Activated B cell treated with CpG ODN at 0.5 μM for 24 hours (primary cell): ENCODE measurements at regions of chr19 and their contacts with region 1.

Region 1: GRCh38 chr19:14550201-14550784 is 20.9 kb downstream of the TECR start:
- DNase-seq: no peak
- ATAC-seq: no peak
- H3K4me3 Mint-ChIP-seq: no peak overlapping the region
- H3K27ac Mint-ChIP-seq: no peak overlapping the region
- H3K4me1 Mint-ChIP-seq: peaks cover 33% of the 10 kb centered on the region
- H3K27me3 Mint-ChIP-seq: no peaks in the 10 kb centered on the region
- CTCF ChIP-seq: no peak

Region 2: GRCh38 chr19:14529254-14530004 is 20.9 kb before region 1 on chr19 and contains the start of gene TECR:
- CTCF ChIA-PET with region 1: interaction called, 3 read pairs
- POLR2A ChIA-PET with region 1: interaction called, 6 read pairs
- intact Hi-C with region 1: loop called (anchors 2 kb)
- DNase-seq: peak; percentile 99
- ATAC-seq: peak; percentile 96
- H3K4me3 Mint-ChIP-seq: peak within 1 kb of the TSS; percentile 95
- H3K27ac Mint-ChIP-seq: peak within 1 kb of the TSS; percentile 96
- H3K4me1 Mint-ChIP-seq: peaks cover 31% of the 10 kb centered on the region
- H3K27me3 Mint-ChIP-seq: no peaks in the 10 kb centered on the region
- CTCF ChIP-seq: no peak
- total RNA-seq, gene TECR: 55.3 and 58.6 TPM in 2 replicates